ENCODE measurements at regions of chr6 and their contacts with region 1.

Region 1: GRCh38 chr6:102571236-102571908 is 1177.9 kb downstream of the GRIK2 start:
- DNase-seq: no peak
- ATAC-seq: no peak
- H3K4me3 ChIP-seq: no peak overlapping the region
- H3K27ac ChIP-seq: no peak overlapping the region
- H3K4me1 ChIP-seq: no peaks in the 10 kb centered on the region
- H3K27me3 ChIP-seq: no peaks in the 10 kb centered on the region
- CTCF ChIP-seq: no peak
- EP300 ChIP-seq: no peak
- POLR2A ChIP-seq: no peak
- RAD21 ChIP-seq: no peak

Region 2: GRCh38 chr6:104252307-104252706 is 1680.9 kb after region 1 on chr6:
- CTCF ChIA-PET with region 1: no interaction called
- POLR2A ChIA-PET with region 1: no interaction called
- in situ Hi-C with region 1: no loop called
- intact Hi-C with region 1: loop called (anchors 5 kb)
- DNase-seq: no peak
- ATAC-seq: no peak
- H3K4me3 ChIP-seq: no peak overlapping the region
- H3K27ac ChIP-seq: no peak overlapping the region
- H3K4me1 ChIP-seq: no peaks in the 10 kb centered on the region
- H3K27me3 ChIP-seq: no peaks in the 10 kb centered on the region
- CTCF ChIP-seq: no peak
- EP300 ChIP-seq: no peak
- POLR2A ChIP-seq: no peak
- RAD21 ChIP-seq: no peak

Measured in HepG2 (cell line).